Left cardiac atrium (tissue), 4 donors: ENCODE measurements at regions of chr5 and their contacts with region 1.

Region 1: DNA sequence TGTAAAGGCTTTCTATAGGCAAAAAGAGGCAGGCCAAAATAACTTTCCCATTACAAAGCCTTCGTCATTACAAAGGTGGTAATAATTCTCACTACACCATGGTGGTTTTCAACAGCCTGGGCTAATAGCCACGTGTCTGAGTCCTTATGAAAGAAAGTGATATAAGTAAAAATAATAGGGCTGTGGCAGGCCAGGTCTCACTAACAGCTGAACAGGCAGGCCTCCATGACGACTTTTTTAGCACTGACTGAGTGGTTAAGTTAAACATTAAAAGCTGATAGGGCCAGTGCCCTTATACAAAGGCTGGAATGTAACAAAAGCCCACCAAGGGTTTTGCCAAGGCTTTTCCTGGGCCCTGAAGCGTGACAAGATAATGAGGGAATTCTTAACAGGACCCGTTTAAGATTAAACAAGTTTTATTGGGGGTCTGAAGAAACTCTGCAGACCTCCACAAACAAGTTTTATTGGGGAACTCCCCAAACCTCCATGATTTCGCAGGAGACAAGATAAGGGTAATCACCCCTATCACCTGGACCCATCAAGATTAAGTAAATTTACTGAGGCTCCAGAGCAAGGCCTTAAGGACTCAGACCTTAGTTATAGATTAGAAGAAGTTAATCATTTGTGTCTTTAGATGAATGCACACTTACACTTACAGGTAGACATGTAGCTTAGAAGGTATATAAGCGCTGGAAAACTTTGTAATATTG is 412.9 kb downstream of the CHSY3 start:
- DNase-seq: no peak
- ATAC-seq: no peak

Region 2: GRCh38 chr5:130605234-130605633 is 288.1 kb after region 1 on chr5:
- intact Hi-C with region 1: loop called in 1 of 2 experiments (anchors 5 kb)
- DNase-seq: no peak
- ATAC-seq: no peak